Ascending aorta (tissue), 2 donors: ENCODE measurements at regions of chr12 and their contacts with region 1.

Region 1: GRCh38 chr12:98418357-98419075 is 96.9 kb upstream of the TMPO start:
- DNase-seq: peak; percentile 60 to 98
- H3K4me3 ChIP-seq: no peak overlapping the region
- H3K27ac ChIP-seq: peak overlapping the region; percentile 76 to 87
- H3K4me1 ChIP-seq: peaks cover 5 to 28% of the 10 kb centered on the region in 2 donors
- H3K27me3 ChIP-seq: no peaks in the 10 kb centered on the region
- CTCF ChIP-seq: no peak

Region 2: DNA sequence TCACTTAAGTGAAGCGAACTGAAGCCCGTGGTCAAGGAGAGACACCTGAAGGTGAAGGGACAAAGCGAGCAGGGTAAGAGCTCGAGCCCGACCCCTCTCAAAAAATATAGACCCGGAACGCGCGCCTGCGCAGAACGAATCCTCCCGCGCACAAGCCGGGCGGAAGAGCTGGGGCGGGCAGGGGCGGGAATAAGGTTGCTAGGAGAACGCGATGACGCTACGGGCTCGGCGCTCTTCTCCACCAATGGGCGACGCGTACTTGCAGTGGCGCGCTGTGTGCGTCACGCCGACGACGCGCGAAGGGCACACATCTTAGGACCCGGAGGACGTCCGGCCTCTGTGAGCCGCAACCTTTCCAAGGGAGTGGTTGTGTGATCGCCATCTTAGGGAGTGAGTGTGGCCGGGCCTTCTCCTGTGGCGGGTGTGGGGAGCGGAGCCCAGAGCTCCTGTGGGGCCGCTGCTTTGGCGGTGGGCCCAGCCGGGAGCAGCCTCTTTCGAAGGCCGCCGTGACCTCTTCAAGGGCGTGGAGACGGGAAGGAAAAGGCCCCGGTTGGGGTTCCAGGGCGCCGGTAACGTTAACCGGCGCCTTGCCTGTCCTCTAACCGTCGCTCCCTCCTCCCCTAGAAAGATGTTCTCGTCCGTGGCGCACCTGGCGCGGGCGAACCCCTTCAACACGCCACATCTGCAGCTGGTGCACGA is 175.0 kb after region 1 on chr12 and contains the start of gene SLC25A3:
- intact Hi-C with region 1: loop called (anchors 1 kb)
- DNase-seq: peak; percentile 92 to 98
- H3K4me3 ChIP-seq: peak within 1 kb of the TSS; percentile 91 to 99
- H3K27ac ChIP-seq: peak within 1 kb of the TSS; percentile 97 to 98
- H3K4me1 ChIP-seq: peaks cover 0 to 11% of the 10 kb centered on the region in 2 donors
- H3K27me3 ChIP-seq: no peaks in the 10 kb centered on the region
- CTCF ChIP-seq: no peak
- total RNA-seq, gene SLC25A3: 437 TPM